CD8-positive, alpha-beta T cell (primary cell): ENCODE measurements at regions of chr3 and their contacts with region 1.

Region 1: GRCh38 chr3:45167011-45167911 is 21.1 kb upstream of the CDCP1 start:
- DNase-seq: peak; percentile 55 to 87 (median 78)
- ATAC-seq: peak; percentile 97
- H3K4me3 ChIP-seq: peak overlapping the region in 1 of 2 experiments; percentile 7
- H3K4me3 Mint-ChIP-seq: peak overlapping the region; percentile 69
- H3K27ac ChIP-seq: peak overlapping the region; percentile 11 to 21
- H3K27ac Mint-ChIP-seq: peak overlapping the region; percentile 77
- H3K4me1 ChIP-seq: peaks cover 22% of the 10 kb centered on the region
- H3K4me1 Mint-ChIP-seq: peaks cover 20% of the 10 kb centered on the region
- H3K27me3 ChIP-seq: no peaks in the 10 kb centered on the region
- H3K27me3 Mint-ChIP-seq: peaks cover 5% of the 10 kb centered on the region
- CTCF ChIP-seq: no peak

Region 2: GRCh38 chr3:45105855-45106671 is 61.2 kb before region 1 on chr3:
- CTCF ChIA-PET with region 1: no interaction called
- POLR2A ChIA-PET with region 1: interaction called, 3 read pairs
- intact Hi-C with region 1: loop called (anchors 5 kb)
- DNase-seq: peak; percentile 18 to 77 (median 64)
- ATAC-seq: peak; percentile 74
- H3K4me3 ChIP-seq: no peak overlapping the region
- H3K4me3 Mint-ChIP-seq: peak overlapping the region; percentile 2
- H3K27ac ChIP-seq: no peak overlapping the region
- H3K27ac Mint-ChIP-seq: no peak overlapping the region
- H3K4me1 ChIP-seq: peaks cover 60% of the 10 kb centered on the region
- H3K4me1 Mint-ChIP-seq: peaks cover 66% of the 10 kb centered on the region
- H3K27me3 ChIP-seq: peaks cover 0 to 16% of the 10 kb centered on the region in 2 experiments
- H3K27me3 Mint-ChIP-seq: peaks cover 15% of the 10 kb centered on the region
- CTCF ChIP-seq: no peak

Region 3: DNA sequence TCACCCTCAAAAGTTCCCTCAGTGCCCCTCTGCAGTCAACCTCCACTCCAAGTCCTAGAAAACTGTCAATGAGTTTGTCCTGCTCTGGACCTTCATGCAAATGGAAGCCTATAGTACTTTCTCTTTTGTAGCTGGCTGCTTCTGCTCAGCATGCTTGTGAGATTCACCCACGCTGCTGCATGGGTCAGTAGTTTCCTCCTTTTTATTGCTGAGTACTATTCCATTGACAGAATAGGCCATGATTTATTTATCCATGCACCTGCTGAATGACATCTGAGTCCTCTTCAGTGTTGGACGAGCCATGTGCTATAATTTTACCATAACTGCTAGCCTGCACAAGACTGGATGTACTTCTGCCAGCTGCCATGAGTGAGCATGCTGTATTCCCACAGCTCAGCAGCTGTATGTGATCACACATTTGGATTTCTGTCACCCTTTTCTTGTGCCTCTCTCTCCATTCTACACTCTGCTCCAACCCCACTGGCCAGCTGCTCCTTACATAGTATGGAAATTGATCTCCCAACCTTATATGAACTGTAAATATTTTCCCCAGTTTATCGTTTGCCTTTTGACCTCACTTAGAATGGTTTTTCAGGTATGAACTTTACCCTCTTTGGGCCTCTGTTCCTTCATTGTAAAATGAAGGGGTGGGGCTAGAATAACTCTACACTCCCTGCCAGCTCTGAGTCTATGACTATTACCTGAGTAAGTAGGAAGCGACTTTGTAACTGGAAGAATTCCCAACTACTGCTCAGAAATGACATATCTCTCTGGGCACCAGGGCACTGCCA is 47.2 kb before region 1 on chr3:
- CTCF ChIA-PET with region 1: no interaction called
- POLR2A ChIA-PET with region 1: interaction called, 4 read pairs
- intact Hi-C with region 1: loop called in 1 of 2 experiments (anchors 2 kb)
- DNase-seq: no peak
- ATAC-seq: no peak
- H3K4me3 ChIP-seq: no peak overlapping the region
- H3K4me3 Mint-ChIP-seq: no peak overlapping the region
- H3K27ac ChIP-seq: no peak overlapping the region
- H3K27ac Mint-ChIP-seq: no peak overlapping the region
- H3K4me1 ChIP-seq: peaks cover 22% of the 10 kb centered on the region
- H3K4me1 Mint-ChIP-seq: peaks cover 22% of the 10 kb centered on the region
- H3K27me3 ChIP-seq: peaks cover 3 to 4% of the 10 kb centered on the region in 2 experiments
- H3K27me3 Mint-ChIP-seq: peaks cover 12% of the 10 kb centered on the region
- CTCF ChIP-seq: no peak